Calu3 (cell line): ENCODE measurements at regions of chr1 and their contacts with region 1.

Region 1: DNA sequence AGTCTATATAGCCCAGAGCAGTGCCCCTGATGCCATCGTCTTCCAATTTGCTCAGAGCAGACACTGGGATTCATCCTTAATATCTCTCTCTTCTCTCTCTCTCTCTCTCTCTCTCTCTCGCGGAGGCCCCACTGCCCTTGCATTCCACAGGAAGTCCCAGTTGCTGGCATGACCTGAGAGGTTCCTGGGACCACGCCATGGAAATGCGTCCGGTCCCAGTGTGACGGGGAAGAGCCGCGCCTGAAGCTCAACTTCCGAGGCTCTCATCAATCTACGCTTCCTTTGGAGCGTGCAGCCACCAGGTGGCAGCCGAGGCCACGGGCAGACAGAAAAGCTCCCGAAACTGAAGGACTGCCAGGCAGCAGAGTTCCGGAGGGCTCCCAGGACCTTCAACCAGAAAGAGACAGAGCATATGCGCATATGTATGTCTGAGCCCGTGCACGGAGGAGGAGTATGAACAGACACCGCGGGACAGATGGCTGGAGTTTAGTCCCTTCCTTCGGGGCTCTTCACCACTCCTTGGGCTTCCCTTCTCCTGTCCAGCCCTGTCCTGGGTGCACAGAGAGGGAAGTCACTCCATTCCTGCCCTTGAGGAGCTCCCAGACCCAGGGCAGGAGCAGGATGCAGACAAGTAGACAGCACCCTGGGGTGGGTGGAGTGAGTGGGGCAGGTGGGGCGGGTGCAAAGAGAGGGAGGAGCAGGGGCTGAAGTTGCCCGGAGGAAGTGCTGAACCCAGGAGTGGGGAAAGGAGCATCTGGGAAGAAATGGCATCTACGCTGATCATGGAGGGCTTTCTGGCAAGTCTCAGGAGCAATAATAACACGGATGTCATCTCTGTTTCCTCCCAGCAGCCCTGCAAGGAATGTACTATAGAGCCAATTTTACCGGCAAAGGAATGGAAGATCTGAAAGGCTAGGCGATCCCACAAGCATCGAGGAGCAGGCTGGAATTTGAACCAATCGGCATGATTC is 10.5 kb downstream of the PDZK1IP1 start:
- DNase-seq: peak; percentile 95
- H3K4me3 Mint-ChIP-seq: peak overlapping the region; percentile 56
- H3K27ac Mint-ChIP-seq: peak overlapping the region; percentile 62
- H3K4me1 Mint-ChIP-seq: peaks cover 55% of the 10 kb centered on the region
- H3K27me3 Mint-ChIP-seq: no peaks in the 10 kb centered on the region
- CTCF ChIP-seq: peak; percentile 63

Region 2: DNA sequence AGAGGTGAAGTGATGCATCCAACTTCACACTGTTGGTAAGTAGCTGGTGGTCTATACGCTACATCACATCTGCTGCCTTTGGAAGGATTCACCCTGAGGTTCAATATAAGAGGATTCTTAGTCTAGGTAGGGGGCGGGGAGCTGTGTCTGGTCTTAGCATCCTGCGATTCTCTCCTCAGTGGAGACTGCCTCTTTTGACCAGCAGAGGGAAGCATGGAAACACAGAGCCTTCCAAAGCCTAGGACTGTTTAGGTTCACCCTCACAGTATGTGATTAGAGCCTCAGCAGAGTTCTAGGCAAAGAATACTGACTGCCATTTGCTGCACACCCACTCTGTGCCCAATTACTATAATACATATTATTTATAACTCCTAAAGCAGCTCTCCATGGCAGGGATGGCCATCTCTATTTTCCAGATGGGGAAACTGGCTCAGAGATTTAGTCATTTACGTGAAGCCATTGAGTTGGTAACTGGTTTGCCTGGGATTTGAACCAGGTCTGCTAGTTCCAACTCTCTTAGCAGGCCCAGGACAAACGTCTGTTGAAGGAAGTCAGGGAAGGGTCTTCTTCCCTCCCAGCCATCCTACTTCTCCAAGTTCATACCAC is 431.5 kb before region 1 on chr1:
- CTCF ChIA-PET with region 1: no interaction called
- intact Hi-C with region 1: loop called (anchors 10 kb)
- DNase-seq: peak; percentile 74
- H3K4me3 Mint-ChIP-seq: no peak overlapping the region
- H3K27ac Mint-ChIP-seq: no peak overlapping the region
- H3K4me1 Mint-ChIP-seq: peaks cover 32% of the 10 kb centered on the region
- H3K27me3 Mint-ChIP-seq: peaks cover 19% of the 10 kb centered on the region
- CTCF ChIP-seq: peak; percentile 77

Region 3: GRCh38 chr1:47161298-47162040 is 17.8 kb before region 1 on chr1:
- CTCF ChIA-PET with region 1: no interaction called
- intact Hi-C with region 1: no loop called
- DNase-seq: no peak
- H3K4me3 Mint-ChIP-seq: no peak overlapping the region
- H3K27ac Mint-ChIP-seq: no peak overlapping the region
- H3K4me1 Mint-ChIP-seq: no peaks in the 10 kb centered on the region
- H3K27me3 Mint-ChIP-seq: peaks cover 13% of the 10 kb centered on the region
- CTCF ChIP-seq: no peak

Region 4: GRCh38 chr1:47192458-47193384 is 13.4 kb after region 1 on chr1:
- CTCF ChIA-PET with region 1: interaction called, 92 read pairs
- intact Hi-C with region 1: no loop called
- DNase-seq: peak; percentile 82
- H3K4me3 Mint-ChIP-seq: peak overlapping the region; percentile 87
- H3K27ac Mint-ChIP-seq: peak overlapping the region; percentile 83
- H3K4me1 Mint-ChIP-seq: peaks cover 55% of the 10 kb centered on the region
- H3K27me3 Mint-ChIP-seq: peaks cover 2% of the 10 kb centered on the region
- CTCF ChIP-seq: peak; percentile 96

Region 5: DNA sequence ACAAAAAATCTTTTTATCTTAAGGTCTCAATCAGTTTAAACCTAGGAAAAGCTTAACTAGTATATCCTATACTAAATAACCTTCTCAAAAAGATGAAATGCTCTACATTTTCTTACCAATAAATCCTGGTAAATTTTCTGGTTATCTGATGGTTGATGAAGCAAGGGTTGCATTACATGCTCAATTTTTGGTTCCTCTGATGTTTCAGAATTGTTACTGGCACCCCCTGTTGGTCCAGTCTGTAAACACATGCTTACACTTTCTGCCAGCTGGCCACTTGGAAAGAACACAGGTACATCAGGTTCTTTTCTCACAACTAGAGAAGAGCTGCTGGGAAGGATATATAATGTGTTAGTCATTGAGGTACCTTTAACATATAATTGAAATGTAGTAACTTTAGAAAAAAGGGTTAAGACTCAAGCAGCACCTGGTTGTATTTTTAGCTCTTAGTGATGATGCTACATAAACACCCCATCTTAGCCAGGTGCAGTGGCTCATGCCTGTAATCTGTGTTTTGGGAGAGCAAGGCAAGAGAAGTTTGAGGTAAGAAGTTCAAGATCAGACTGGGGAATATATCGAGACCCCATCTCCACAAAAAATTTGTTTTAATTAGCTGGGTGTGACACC is 83.6 kb after region 1 on chr1:
- CTCF ChIA-PET with region 1: interaction called, 52 read pairs
- intact Hi-C with region 1: loop called (anchors 1 kb)
- DNase-seq: peak; percentile 64
- H3K4me3 Mint-ChIP-seq: no peak overlapping the region
- H3K27ac Mint-ChIP-seq: no peak overlapping the region
- H3K4me1 Mint-ChIP-seq: no peaks in the 10 kb centered on the region
- H3K27me3 Mint-ChIP-seq: no peaks in the 10 kb centered on the region
- CTCF ChIP-seq: peak; percentile 63

Region 6: GRCh38 chr1:47725992-47726855 is 546.9 kb after region 1 on chr1:
- CTCF ChIA-PET with region 1: interaction called, 12 read pairs
- intact Hi-C with region 1: no loop called
- DNase-seq: peak; percentile 85
- H3K4me3 Mint-ChIP-seq: peak overlapping the region; percentile 55
- H3K27ac Mint-ChIP-seq: no peak overlapping the region
- H3K4me1 Mint-ChIP-seq: peaks cover 26% of the 10 kb centered on the region
- H3K27me3 Mint-ChIP-seq: peaks cover 42% of the 10 kb centered on the region
- CTCF ChIP-seq: peak; percentile 72